RWPE1 (cell line): ENCODE measurements at regions of chr9 and their contacts with region 1.

Region 1: GRCh38 chr9:86257391-86257790 is 2.1 kb downstream of the C9orf153 start:
- DNase-seq: no peak
- H3K27ac ChIP-seq: no peak overlapping the region
- CTCF ChIP-seq: no peak

Region 2: DNA sequence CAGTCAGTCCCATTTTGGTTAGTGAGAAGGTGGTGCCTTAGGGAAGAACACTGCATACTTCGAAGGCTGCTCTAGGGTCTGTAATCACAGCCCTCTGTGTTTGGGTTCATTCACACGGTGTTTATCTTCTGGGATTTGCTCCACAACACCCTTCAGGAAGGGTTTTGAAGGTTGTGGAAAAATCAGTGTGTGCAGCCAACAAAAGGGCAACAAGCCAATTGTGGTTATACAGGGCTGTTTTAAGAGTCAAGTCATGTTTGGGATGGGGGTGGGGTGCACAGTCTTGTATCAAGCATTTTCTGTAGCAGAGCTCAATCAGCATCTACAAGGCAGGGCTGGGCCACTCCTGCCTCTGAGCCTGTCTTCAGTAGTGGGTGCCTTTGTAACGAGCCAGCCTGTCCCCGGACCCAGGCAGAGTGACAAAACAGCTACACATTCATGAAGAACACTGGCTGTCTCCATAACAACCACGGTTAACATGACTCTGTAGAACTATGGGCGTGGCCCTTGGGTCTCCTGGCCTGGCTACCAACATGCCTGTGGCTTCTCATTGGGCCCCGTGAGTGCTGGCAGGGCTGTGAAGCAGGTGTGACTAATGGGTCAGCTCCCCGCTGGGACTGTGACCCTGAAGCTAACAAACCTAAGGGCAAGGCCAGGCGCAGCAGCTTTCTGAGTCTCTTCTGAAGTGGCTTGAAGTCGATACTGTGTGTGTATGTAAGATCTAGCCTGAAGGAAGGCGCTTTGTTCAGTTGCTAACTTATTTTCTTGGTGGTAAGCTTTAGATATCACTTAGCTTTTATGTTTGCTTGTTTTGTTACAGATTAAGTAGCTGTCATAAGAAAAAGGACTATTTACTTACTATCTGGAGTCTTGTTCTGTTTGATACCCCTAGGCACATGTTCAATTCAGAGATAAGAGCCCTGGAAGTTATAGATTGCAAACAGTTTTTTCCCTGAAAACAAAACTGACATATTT is 130.1 kb before region 1 on chr9:
- CTCF ChIA-PET with region 1: no interaction called
- POLR2A ChIA-PET with region 1: no interaction called
- DNase-seq: peak; percentile 95
- H3K27ac ChIP-seq: no peak overlapping the region
- CTCF ChIP-seq: no peak

Region 3: GRCh38 chr9:86222667-86223066 is 34.7 kb before region 1 on chr9:
- CTCF ChIA-PET with region 1: no interaction called
- POLR2A ChIA-PET with region 1: no interaction called
- DNase-seq: no peak
- H3K27ac ChIP-seq: no peak overlapping the region
- CTCF ChIP-seq: no peak

Region 4: GRCh38 chr9:86329649-86330048 is 72.3 kb after region 1 on chr9:
- CTCF ChIA-PET with region 1: no interaction called
- POLR2A ChIA-PET with region 1: interaction called, 10 read pairs
- DNase-seq: no peak
- H3K27ac ChIP-seq: no peak overlapping the region
- CTCF ChIP-seq: no peak